ENCODE measurements at regions of chr22 and their contacts with region 1.

Region 1: DNA sequence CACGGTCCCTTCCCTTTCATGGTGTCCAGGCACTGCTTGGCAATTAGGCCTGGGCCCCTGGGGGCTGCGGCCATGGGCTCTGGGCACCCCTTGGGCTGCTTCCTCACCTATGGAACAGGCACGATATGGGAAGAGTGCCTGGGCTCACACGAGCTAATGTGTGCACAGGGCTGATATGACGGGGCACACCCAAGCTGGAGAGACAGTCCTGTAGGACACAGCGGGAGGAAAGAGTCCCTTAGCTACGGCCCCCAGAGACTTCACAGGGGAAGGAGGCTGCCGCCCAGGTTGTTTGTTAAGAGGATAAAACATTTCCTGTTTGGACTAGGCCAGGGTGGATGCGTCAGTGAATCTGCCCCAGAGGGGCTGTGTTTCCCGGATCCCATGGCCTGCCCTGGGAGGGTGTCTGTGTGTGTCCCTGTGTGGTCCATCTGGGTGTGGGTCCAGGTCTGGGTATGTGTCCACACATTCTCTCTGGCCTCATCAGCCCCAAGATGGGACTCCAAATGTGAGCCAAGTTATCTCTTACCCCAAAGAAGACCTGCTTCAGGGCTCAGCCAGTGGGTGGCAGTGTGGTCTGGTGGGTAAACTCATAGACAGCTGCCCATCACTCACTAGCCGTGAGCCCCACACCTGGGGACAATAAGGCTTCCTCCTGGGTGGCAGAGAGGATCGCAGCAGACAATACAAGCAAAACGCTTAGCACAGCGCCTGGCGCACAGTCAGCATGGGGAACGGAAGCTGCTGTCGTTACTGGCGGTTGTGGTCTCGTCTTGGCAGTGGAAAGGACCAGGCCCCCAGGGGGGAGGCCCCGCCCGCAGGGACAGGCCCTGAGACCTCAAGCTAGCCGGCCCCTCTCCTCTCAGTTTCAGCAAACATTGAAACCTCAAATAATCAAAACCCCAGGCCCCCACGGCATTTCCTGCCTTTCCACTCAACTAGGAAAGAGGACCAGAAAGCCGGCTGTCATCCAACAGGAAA is 3.2 kb upstream of the EMID1 start:
- DNase-seq: peak; percentile 56
- ATAC-seq: peak; percentile 68
- H3K4me3 ChIP-seq: no peak overlapping the region
- H3K4me3 Mint-ChIP-seq: peak overlapping the region; percentile 33
- H3K27ac ChIP-seq: no peak overlapping the region
- H3K27ac Mint-ChIP-seq: no peak overlapping the region
- H3K4me1 ChIP-seq: peaks cover 26 to 28% of the 10 kb centered on the region in 2 donors
- H3K4me1 Mint-ChIP-seq: peaks cover 28% of the 10 kb centered on the region
- H3K27me3 ChIP-seq: peaks cover 0 to 73% (median 38%) of the 10 kb centered on the region in 4 experiments
- H3K27me3 Mint-ChIP-seq: peaks cover 74% of the 10 kb centered on the region
- CTCF ChIP-seq: peak; percentile 22

Region 2: GRCh38 chr22:29167032-29167911 is 35.2 kb before region 1 on chr22:
- CTCF ChIA-PET with region 1: no interaction called
- POLR2A ChIA-PET with region 1: no interaction called
- intact Hi-C with region 1: loop called (anchors 5 kb)
- DNase-seq: peak; percentile 94
- ATAC-seq: peak; percentile 92
- H3K4me3 ChIP-seq: peak overlapping the region in 1 of 5 experiments; percentile 6
- H3K4me3 Mint-ChIP-seq: peak overlapping the region; percentile 80
- H3K27ac ChIP-seq: peak overlapping the region; percentile 34 to 76
- H3K27ac Mint-ChIP-seq: peak overlapping the region; percentile 93
- H3K4me1 ChIP-seq: peaks cover 31 to 32% of the 10 kb centered on the region in 2 donors
- H3K4me1 Mint-ChIP-seq: peaks cover 34% of the 10 kb centered on the region
- H3K27me3 ChIP-seq: peaks cover 0 to 30% (median 13%) of the 10 kb centered on the region in 4 experiments
- H3K27me3 Mint-ChIP-seq: peaks cover 35% of the 10 kb centered on the region
- CTCF ChIP-seq: no peak

Region 3: GRCh38 chr22:29231971-29232959 is 29.8 kb after region 1 on chr22:
- CTCF ChIA-PET with region 1: no interaction called
- POLR2A ChIA-PET with region 1: no interaction called
- intact Hi-C with region 1: no loop called
- DNase-seq: no peak
- ATAC-seq: no peak
- H3K4me3 ChIP-seq: no peak overlapping the region
- H3K4me3 Mint-ChIP-seq: no peak overlapping the region
- H3K27ac ChIP-seq: no peak overlapping the region
- H3K27ac Mint-ChIP-seq: no peak overlapping the region
- H3K4me1 ChIP-seq: no peaks in the 10 kb centered on the region
- H3K4me1 Mint-ChIP-seq: no peaks in the 10 kb centered on the region
- H3K27me3 ChIP-seq: peaks cover 0 to 9% (median 0%) of the 10 kb centered on the region in 4 experiments
- H3K27me3 Mint-ChIP-seq: peaks cover 12% of the 10 kb centered on the region
- CTCF ChIP-seq: no peak